Left lung (tissue), 14 donors: ENCODE measurements at regions of chr21 and their contacts with region 1.

Region 1: DNA sequence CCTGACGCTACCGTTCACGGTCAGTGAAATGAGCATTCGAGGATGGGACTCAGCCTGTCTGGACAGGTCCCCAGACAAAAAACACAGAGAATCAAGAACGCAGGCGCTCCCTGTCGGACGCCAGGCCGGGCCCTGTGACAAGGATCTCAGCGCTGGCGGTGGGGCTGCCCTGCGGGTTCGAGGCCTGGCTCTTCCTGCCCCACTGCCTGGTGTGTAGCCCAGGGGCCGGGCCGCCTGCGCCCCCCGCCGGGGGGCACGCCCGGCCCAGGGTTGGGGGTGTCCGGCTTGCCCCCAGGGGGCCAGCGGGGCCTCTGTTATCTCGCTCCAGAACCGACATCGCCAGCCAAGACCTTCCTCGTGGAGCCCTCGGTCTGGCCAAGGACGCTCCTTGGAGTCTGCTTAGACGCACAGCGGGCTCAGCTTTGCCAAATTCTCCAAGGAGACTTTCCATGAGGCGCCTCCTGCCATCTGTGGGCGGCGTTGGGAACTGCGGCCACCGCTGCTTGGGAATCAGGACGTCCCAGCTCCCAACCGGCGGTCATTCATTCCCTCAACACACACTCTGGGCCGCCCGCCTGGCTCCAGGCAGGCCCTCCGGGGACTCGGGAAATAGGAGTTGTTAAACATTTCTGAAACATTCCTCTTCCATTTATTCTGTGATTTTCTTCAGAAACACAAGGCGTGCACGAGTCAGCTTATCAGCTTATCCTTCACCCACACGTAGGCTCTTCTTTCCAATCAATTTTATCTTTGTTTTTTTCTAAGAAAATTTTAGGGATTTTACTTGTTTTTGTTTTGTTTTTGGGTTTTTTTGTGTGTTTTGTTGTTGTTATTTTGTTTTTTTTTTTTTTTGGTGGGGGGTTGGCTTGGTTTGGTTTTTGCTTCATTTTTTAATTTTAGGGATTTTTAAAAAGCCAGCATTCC is 11.4 kb upstream of the RIPK4 start:
- DNase-seq: peak; percentile 77 to 89 (median 86)
- ATAC-seq: peak; percentile 95
- H3K4me3 ChIP-seq: no peak overlapping the region
- H3K27ac ChIP-seq: no peak overlapping the region
- H3K4me1 ChIP-seq: peaks cover 5 to 13% of the 10 kb centered on the region in 2 donors
- H3K27me3 ChIP-seq: peaks cover 13 to 83% of the 10 kb centered on the region in 2 donors
- CTCF ChIP-seq: peak; percentile 89 to 92

Region 2: DNA sequence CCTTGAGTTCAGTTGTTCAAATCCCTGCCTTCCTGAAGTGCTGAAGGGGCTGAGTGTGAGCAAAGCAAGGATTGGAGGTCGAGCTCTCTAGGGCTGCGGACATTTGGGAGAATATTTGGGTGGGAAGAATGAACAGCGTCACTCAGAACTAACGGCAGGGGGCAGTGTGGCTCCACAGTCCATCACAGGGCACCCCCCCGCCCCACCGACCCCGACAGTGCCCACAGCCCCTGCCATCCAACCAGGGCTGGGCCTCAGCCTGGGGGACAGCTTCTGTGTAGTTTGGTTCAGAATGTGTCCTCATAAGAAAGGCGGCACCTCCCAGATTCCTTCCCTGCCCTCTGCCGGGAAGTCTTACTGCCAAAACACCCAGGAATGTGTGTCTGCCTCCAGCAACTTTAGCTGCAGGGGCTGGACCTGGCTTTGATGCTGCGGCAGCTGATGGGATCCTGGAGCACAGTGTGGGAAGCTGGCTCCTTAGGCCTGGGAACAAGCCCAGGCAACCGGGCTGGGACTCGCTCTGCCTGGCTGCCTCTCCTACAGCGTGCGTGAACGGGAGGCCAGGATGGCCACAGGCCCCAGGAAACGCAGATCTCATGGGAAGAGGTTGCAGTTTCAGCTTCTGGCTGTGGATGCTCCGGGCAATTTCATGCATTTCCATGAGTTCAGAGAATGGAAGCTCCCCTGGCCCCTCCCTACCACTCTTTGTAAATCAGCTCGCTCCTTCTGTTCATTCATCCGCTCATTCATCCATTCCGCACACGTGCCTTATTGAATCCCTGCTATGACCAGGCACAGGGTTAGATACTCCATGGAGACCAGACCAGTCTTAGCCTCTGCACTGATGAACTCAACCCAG is 165.3 kb before region 1 on chr21:
- intact Hi-C with region 1: loop called in 1 of 2 experiments (anchors 5 kb)
- DNase-seq: peak in 3 of 4 donors; percentile 72 to 76 (median 74)
- ATAC-seq: peak; percentile 83
- H3K4me3 ChIP-seq: no peak overlapping the region
- H3K27ac ChIP-seq: peak overlapping the region; percentile 23 to 33
- H3K4me1 ChIP-seq: peaks cover 7 to 16% of the 10 kb centered on the region in 2 donors
- H3K27me3 ChIP-seq: peaks cover 0 to 37% of the 10 kb centered on the region in 2 donors
- CTCF ChIP-seq: peak; percentile 52 to 57

Region 3: DNA sequence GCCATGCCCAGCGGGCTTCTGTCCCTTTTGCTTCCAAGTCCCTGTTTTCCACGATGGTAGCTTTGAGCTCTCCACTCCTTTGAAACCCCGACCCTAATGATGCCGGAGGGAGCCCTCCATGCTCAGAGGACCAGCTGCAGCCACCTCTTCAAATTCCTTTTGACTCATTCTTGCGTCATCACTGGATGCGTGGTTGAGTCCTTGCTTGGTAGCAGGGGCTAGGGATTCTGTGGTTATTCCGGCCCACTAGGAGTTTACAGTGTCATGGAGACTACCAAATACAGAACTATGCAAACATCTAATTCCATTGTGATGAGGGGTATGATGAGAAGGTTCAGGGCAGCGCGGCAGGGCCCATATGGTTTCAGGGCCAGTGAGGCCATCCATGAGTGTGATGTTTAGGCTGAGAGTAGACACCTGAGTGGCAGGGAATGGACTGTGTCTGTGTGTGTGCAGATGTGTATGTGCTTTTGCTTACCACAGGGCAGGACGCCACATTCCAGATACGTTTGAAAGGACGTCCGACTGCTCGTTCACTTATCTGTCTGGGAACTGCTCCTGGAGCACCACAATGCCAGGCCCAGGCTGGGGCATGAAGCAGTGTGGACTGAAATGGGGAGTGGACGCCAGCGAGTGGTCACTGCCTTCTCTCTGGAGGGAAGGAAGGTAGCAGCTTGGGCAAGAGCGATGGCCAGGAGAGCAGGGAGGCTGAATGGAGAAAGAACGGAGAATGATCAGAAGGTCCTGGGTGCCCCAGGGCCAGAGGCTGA is 262.4 kb after region 1 on chr21:
- intact Hi-C with region 1: no loop called
- DNase-seq: peak in 1 of 4 donors; percentile 30
- ATAC-seq: peak; percentile 66
- H3K4me3 ChIP-seq: no peak overlapping the region
- H3K27ac ChIP-seq: peak overlapping the region in 1 of 2 donors; percentile 48
- H3K4me1 ChIP-seq: peaks cover 8 to 14% of the 10 kb centered on the region in 2 donors
- H3K27me3 ChIP-seq: no peaks in the 10 kb centered on the region
- CTCF ChIP-seq: no peak